Activated CD4-positive, alpha-beta memory T cell treated with anti-CD3 and anti-CD28 coated beads for 36 hours (primary cell): ENCODE measurements at regions of chr14 and their contacts with region 1.

Region 1: DNA sequence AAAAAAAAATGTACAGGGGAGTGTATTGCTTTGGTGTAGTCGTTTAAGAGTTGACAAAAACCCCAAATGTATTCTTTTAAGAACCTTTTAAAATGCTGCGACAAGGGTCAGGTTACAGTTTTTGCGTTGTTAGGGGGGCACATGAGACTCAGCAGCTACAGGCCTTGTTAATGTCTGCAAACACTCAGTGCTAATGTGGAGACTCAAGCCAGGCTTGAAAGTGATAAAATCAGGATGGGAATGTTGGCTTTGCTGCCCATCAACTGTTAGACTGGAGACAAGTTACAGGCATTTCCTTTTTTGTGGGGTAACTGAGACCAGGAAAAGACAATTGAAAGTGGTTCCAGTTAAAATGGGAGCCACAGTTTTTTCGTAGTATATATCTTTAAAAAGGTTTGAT is 84.8 kb downstream of the PRKCH start:
- DNase-seq: no peak
- H3K4me3 Mint-ChIP-seq: no peak overlapping the region
- H3K27ac Mint-ChIP-seq: peak overlapping the region; percentile 72
- H3K4me1 Mint-ChIP-seq: peaks cover 69% of the 10 kb centered on the region
- H3K27me3 Mint-ChIP-seq: no peaks in the 10 kb centered on the region

Region 2: GRCh38 chr14:61420326-61420725 is 14.1 kb after region 1 on chr14:
- CTCF ChIA-PET with region 1: interaction called, 3 read pairs
- POLR2A ChIA-PET with region 1: interaction called, 4 read pairs
- intact Hi-C with region 1: loop called (anchors 1 kb)
- DNase-seq: peak; percentile 44
- H3K4me3 Mint-ChIP-seq: no peak overlapping the region
- H3K27ac Mint-ChIP-seq: peak overlapping the region; percentile 73
- H3K4me1 Mint-ChIP-seq: peaks cover 28% of the 10 kb centered on the region
- H3K27me3 Mint-ChIP-seq: no peaks in the 10 kb centered on the region